ENCODE measurements at regions of chr3 and their contacts with region 1.

Region 1: GRCh38 chr3:98817547-98818041 is 54.5 kb downstream of the ST3GAL6 start:
- DNase-seq: no peak
- H3K4me3 ChIP-seq: no peak overlapping the region
- H3K27ac ChIP-seq: no peak overlapping the region
- H3K4me1 ChIP-seq: no peaks in the 10 kb centered on the region; a peak in 1 of 7 replicates
- H3K27me3 ChIP-seq: no peaks in the 10 kb centered on the region
- CTCF ChIP-seq: peak in 2 of 3 experiments; percentile 22 to 60; a peak in 2 of 4 replicates
- EP300 ChIP-seq: no peak
- POLR2A ChIP-seq: no peak
- RAD21 ChIP-seq: peak; percentile 64

Region 2: DNA sequence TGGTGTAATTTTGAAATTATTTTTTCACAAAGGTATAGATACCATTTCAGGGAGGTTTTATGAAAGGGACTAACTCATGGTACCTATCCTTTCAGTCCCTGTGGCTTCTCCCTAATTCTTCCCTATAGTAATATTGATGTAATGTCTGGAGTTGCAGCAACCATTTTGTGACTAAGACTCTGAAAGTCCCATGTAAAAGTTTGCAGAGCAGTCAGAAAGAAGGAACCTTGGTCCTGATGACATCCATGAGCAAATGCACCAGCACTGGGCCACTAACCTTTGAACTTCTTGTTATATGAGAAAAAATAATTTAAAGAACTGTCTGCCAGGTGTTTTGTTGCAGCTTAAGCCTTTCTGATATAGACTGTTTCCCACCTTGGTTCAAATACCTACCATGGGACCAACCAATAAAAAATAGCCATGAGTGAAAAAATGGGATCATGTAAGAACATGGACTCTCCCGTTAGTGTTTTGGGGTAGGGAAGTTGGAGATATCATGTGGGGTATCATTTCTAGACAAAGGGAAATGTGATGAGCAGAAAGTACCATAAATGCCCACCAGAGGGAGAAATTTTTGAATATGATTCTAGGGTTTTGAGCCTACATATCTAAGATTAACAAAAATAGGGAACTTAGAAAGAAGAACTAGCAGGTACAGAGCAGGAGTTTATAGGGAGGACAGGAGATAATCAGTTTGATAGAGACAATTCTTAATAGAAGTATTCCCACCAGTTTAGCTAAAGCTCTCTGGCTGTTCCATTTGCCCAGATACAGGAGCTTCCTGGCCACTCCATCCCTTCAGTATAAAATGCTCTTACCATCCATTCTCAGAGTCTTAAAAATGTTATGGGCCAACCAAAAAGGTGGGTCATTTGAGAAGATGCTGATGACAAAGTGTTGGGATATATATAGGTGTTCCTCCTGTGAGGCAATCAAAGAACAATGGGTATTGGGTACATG is 220.8 kb before region 1 on chr3:
- CTCF ChIA-PET with region 1: interaction called, 74 read pairs
- POLR2A ChIA-PET with region 1: no interaction called
- DNase-seq: no peak
- H3K4me3 ChIP-seq: no peak overlapping the region
- H3K27ac ChIP-seq: no peak overlapping the region
- H3K4me1 ChIP-seq: peaks cover 0 to 5% (median 3%) of the 10 kb centered on the region in 4 experiments; a peak in 2 of 7 replicates
- H3K27me3 ChIP-seq: peaks cover 0 to 1% (median 0%) of the 10 kb centered on the region in 4 experiments; a peak in 2 of 7 replicates
- CTCF ChIP-seq: peak in 2 of 3 experiments; percentile 8 to 20; a peak in 2 of 4 replicates
- EP300 ChIP-seq: no peak
- POLR2A ChIP-seq: no peak
- RAD21 ChIP-seq: no peak

Measured in H1 (cell line).